Activated naive CD4-positive, alpha-beta T cell treated with anti-CD3 and anti-CD28 coated beads for 36 hours (primary cell): ENCODE measurements at regions of chr4 and their contacts with region 1.

Region 1: DNA sequence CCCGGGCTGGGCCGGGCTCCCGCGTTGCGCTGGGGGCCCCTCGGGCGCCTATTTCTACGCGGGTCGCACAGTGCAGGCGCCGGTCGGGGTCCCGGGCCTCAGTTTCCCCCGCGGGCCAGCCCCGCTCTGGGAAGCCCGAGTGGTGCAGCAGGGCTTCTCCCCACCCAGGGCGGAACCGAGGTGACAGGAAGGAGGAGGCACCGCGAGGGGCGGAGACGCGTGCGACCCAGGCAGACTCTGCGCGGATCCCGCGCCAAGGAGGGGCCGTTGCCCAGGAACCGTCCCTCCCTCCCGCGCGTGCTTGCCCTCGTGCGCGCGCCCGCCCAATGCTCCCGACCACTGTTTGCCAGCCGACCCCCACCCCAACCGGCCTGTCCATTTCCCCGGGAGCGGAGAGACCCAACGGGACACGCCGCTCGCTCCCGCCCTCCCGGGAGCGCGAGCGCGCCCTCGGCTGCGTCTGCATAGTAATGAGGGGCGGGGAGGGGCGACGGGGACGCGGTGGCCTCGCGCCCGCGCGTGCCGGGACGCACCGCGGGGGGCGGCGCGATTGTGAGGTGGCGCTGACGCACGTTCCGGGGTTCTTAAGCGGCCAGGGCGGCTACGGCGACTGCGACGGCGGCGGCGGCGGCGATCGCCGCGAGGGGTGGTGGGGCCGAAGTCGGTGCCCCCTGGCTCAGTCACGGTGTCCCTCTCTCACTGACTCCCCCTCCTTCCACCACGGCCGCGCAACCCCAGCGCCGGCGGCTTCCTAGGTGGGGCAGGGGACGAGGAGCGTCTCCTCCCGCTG is at the start of gene CPEB2:
- DNase-seq: peak; percentile 91
- H3K4me3 Mint-ChIP-seq: peak within 1 kb of the TSS; percentile 88
- H3K27ac Mint-ChIP-seq: peak within 1 kb of the TSS; percentile 94
- H3K4me1 Mint-ChIP-seq: peaks cover 12% of the 10 kb centered on the region
- H3K27me3 Mint-ChIP-seq: no peaks in the 10 kb centered on the region
- total RNA-seq, gene CPEB2: 4.4 to 5.4 TPM

Region 2: DNA sequence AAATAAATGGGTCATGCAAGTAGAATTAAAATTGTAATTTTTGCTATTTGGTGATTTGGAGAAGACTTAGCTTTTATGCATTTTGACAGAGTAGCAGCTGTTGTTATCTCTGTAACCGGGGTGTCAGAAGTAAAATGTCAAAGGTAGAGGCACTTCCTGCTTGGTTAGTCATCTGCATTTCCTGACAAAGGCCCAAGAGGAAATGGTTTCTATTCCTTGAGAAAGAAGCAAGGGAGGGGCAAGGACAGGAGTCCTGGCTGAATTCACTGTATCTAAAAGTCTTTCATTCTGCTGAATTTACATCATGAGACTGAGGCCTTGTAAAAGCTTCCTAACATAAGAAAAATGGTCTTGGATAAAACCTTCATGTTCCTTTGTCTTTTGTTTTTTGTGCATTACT is 823.6 kb before region 1 on chr4:
- CTCF ChIA-PET with region 1: no interaction called
- intact Hi-C with region 1: loop called (anchors 2 kb)
- DNase-seq: peak; percentile 7
- H3K4me3 Mint-ChIP-seq: no peak overlapping the region
- H3K27ac Mint-ChIP-seq: peak overlapping the region; percentile 75
- H3K4me1 Mint-ChIP-seq: peaks cover 20% of the 10 kb centered on the region
- H3K27me3 Mint-ChIP-seq: no peaks in the 10 kb centered on the region

Region 3: DNA sequence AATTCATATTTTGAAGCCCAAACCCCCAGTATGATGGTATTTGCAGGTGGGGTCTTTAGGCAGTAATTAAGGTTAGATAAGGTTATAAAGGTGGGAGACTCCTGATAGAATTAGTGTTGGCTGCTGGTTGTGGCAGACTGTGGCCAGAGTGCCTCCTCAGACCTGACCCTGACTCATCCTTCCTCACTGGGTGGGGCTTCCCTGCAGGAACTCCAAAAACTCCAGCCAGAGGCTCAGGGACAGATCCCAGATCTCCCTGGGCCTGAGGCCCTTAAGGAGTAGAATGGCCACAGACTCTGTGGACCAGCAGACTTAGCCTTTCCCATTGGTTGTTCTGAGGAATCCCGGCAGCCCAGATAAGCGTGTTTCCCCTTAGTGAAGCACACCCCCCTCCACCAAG is 462.8 kb before region 1 on chr4:
- CTCF ChIA-PET with region 1: no interaction called
- intact Hi-C with region 1: no loop called
- DNase-seq: no peak
- H3K4me3 Mint-ChIP-seq: no peak overlapping the region
- H3K27ac Mint-ChIP-seq: no peak overlapping the region
- H3K4me1 Mint-ChIP-seq: no peaks in the 10 kb centered on the region
- H3K27me3 Mint-ChIP-seq: peaks cover 11% of the 10 kb centered on the region

Region 4: DNA sequence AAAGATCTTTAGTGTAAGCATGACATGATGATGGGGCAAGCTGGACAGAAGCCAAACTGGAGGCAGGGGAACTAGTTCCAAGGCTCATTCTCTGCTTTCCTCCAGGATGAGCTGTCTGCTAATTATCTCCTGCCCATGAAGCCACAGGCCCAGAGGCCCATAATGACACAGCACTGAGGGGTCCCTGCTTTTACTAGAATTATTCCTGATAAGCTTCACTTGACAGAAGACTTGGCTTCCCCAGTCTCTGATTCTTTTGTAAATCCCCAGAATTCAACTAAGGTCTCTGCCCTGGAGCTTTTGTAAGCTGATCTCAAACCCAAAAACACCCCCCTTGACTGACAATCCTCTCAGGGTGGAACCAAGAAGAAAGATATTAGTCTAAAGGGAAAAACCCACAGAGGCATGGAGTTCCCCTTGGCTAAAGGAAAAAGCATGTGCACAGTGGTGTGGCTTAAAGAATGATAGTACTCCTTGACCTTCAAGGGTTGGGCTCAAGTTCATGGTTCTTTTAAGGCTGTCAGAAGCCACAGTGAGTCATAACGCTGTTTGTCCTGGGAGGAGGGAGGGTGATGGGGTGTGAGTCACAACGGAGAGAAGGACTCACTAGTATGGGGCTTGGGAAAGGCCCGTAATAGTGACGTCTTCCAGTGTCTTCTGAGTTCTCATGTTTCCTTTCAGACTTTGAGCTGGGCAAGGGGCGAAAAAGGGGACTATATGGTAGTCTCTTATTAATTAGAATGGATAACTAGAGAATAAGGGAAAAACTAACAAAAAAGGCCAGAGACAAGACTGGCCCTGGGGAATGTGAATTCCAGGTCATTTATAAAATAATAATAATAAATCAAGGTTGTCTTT is 145.8 kb before region 1 on chr4:
- CTCF ChIA-PET with region 1: no interaction called
- intact Hi-C with region 1: loop called (anchors 1 kb)
- DNase-seq: peak; percentile 88
- H3K4me3 Mint-ChIP-seq: no peak overlapping the region
- H3K27ac Mint-ChIP-seq: peak overlapping the region; percentile 86
- H3K4me1 Mint-ChIP-seq: peaks cover 24% of the 10 kb centered on the region
- H3K27me3 Mint-ChIP-seq: peaks cover 19% of the 10 kb centered on the region

Region 5: DNA sequence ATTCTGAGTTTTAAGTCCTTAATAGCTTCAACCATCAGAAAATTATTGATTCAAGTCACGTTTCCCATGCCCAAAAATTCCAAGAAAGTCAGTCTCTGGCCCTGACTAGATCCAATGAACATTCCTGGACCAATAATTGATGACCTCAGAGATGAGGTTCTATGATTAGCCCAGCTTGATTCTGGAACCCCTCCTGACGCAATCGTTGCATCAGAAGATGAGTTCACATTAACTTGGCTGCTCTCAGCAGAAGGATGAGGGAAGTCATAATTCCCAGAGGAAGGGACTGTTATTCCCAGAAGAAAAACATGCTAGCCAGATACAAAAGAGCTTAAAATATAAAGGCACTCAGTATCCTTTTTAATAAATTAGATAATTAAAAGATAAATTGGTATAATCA is 34.1 kb before region 1 on chr4:
- CTCF ChIA-PET with region 1: no interaction called
- intact Hi-C with region 1: no loop called
- DNase-seq: no peak
- H3K4me3 Mint-ChIP-seq: no peak overlapping the region
- H3K27ac Mint-ChIP-seq: no peak overlapping the region
- H3K4me1 Mint-ChIP-seq: no peaks in the 10 kb centered on the region
- H3K27me3 Mint-ChIP-seq: peaks cover 26% of the 10 kb centered on the region

Region 6: GRCh38 chr4:15162465-15163283 is 160.6 kb after region 1 on chr4:
- CTCF ChIA-PET with region 1: no interaction called
- intact Hi-C with region 1: loop called (anchors 5 kb)
- DNase-seq: no peak
- H3K4me3 Mint-ChIP-seq: no peak overlapping the region
- H3K27ac Mint-ChIP-seq: no peak overlapping the region
- H3K4me1 Mint-ChIP-seq: no peaks in the 10 kb centered on the region
- H3K27me3 Mint-ChIP-seq: peaks cover 18% of the 10 kb centered on the region

Region 7: GRCh38 chr4:15655229-15656037 is 653.4 kb after region 1 on chr4 and contains the start of gene FBXL5:
- CTCF ChIA-PET with region 1: no interaction called
- intact Hi-C with region 1: loop called (anchors 1 kb)
- DNase-seq: peak; percentile 79
- H3K4me3 Mint-ChIP-seq: peak within 1 kb of the TSS; percentile 99
- H3K27ac Mint-ChIP-seq: peak within 1 kb of the TSS; percentile 96
- H3K4me1 Mint-ChIP-seq: peaks cover 68% of the 10 kb centered on the region
- H3K27me3 Mint-ChIP-seq: no peaks in the 10 kb centered on the region
- total RNA-seq, gene FBXL5: 30.8 to 31.0 TPM

Region 8: DNA sequence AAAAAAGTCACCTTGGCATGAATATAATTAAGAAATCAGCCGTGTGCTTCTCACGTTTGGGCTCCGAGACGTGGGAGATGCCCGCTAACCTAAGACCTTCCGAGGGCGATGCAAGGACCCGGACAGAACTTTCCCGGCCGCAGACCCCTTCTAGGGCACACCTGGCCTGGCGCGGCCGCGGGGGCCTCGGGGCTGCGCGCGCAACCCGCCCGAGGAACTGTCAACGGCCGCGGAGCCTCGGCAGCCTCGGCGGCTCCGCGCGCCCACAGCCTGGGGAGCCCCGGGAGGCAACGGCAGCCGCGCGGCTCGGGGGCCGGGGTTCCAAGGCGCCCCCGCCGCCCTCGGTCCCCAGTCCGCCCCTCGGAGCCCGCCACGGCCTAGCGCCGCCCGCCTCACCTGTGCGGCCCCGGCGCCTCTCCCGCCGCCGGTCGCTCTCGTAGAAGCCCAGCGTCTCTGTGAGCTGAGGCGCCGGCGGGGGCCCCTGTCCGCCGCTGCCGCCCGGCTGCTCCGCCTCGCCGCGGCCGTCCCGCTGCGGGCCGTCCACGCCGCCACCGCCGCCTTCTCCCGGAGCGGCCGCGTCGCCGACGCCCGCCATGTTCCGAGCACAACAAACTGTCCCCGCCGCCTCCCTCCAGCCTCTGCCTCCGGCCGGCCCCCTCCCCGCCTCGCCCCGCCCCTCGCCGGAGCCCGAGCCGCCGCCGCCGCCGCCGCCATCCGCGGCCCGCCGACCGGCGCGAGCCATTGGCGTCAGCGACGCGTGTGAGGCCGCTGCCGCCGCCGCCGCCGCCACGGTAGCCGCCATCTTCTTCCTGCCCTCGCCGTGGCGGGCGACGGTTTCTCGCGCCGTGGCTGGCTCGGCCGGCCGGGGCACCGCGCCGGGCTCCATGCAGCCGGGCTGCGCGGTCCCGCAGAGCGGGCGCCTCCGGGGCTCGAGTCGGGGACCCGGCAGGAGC is 1224.1 kb after region 1 on chr4 and contains the start of gene TAPT1:
- CTCF ChIA-PET with region 1: no interaction called
- intact Hi-C with region 1: loop called (anchors 5 kb)
- DNase-seq: peak; percentile 79
- H3K4me3 Mint-ChIP-seq: peak within 1 kb of the TSS; percentile 91
- H3K27ac Mint-ChIP-seq: peak within 1 kb of the TSS; percentile 98
- H3K4me1 Mint-ChIP-seq: peaks cover 56% of the 10 kb centered on the region
- H3K27me3 Mint-ChIP-seq: no peaks in the 10 kb centered on the region
- total RNA-seq, gene TAPT1: 48.6 to 48.9 TPM